GM12878 (cell line): ENCODE measurements at regions of chr1 and their contacts with region 1.

Region 1: DNA sequence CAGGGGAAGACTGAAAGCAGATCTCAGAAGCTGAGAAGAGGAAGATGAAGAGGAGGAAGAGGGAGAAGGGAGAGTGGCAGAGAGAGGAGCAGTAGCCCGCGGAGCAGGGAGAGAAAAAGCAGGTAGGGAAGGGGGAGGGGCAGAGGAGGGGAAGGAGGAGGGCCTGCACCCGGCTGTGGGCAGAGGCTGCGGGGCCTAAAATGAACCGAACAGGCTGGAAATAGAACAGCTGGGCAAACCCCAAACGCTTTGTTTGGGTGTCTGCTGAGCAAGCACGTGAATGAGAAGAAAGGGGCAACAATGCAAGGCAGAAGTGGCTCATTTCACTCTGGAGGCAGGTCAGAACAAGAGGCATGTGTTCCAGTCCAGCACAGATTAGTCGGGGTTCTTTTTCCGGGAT is 33.5 kb downstream of the KCNC4 start:
- DNase-seq: no peak
- ATAC-seq: peak; percentile 90
- H3K4me3 ChIP-seq: no peak overlapping the region
- H3K27ac ChIP-seq: no peak overlapping the region
- H3K4me1 ChIP-seq: peaks cover 15% of the 10 kb centered on the region; the same call in 1 of the 2 replicates
- H3K27me3 ChIP-seq: no peaks in the 10 kb centered on the region; a peak in 1 of 4 replicates
- CTCF ChIP-seq: no peak
- EP300 ChIP-seq: peak in 1 of 2 experiments; percentile 38; a peak in 1 of 4 replicates
- POLR2A ChIP-seq: no peak
- RAD21 ChIP-seq: no peak

Region 2: DNA sequence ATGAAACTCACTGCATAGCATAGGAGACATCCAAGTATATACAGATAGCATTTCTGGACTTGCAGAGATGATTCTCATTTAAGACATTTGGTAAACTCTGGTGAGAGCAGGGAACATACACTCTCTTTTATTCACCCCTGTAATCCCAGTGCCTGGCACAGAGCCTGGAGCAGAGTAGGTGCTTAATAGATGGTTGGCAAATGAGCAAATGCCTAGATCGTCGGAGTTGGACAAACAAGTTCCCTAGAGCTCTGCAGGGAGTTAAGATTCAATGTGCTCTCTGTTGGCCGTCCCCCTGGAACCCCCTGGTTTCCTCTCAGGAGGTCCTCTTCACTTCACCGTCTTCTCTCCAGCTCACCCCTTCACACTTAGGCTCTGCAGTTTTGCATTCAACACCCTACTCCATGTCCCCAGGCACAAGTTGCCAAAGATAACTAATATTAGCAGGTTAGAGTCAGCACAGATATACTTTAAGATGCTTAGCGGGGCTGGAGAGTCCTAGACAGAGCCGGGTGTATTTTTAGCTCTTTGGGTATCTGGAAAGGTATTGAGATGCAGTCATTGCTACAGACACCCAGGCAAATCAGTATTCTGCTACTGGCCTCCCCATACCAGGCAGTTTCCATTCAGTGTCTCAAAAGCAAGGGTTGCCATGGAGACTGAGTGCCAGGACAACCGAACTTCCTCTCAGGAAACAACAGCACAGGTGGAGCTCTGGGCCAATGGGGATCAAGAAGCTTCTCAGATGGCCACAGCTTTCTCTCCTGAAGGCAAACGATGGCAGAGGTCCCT is 11.6 kb after region 1 on chr1:
- CTCF ChIA-PET with region 1: interaction called, 5 read pairs
- POLR2A ChIA-PET with region 1: interaction called, 4 read pairs
- RAD21 ChIA-PET with region 1: interaction called, 5 read pairs
- SMC1A ChIA-PET with region 1: interaction called, 14 read pairs
- in situ Hi-C with region 1: no loop called
- intact Hi-C with region 1: no loop called
- DNase-seq: no peak
- ATAC-seq: peak; percentile 73
- H3K4me3 ChIP-seq: no peak overlapping the region
- H3K27ac ChIP-seq: no peak overlapping the region
- H3K4me1 ChIP-seq: peaks cover 6% of the 10 kb centered on the region
- H3K27me3 ChIP-seq: no peaks in the 10 kb centered on the region
- CTCF ChIP-seq: no peak
- EP300 ChIP-seq: no peak
- POLR2A ChIP-seq: no peak
- RAD21 ChIP-seq: no peak

Region 3: DNA sequence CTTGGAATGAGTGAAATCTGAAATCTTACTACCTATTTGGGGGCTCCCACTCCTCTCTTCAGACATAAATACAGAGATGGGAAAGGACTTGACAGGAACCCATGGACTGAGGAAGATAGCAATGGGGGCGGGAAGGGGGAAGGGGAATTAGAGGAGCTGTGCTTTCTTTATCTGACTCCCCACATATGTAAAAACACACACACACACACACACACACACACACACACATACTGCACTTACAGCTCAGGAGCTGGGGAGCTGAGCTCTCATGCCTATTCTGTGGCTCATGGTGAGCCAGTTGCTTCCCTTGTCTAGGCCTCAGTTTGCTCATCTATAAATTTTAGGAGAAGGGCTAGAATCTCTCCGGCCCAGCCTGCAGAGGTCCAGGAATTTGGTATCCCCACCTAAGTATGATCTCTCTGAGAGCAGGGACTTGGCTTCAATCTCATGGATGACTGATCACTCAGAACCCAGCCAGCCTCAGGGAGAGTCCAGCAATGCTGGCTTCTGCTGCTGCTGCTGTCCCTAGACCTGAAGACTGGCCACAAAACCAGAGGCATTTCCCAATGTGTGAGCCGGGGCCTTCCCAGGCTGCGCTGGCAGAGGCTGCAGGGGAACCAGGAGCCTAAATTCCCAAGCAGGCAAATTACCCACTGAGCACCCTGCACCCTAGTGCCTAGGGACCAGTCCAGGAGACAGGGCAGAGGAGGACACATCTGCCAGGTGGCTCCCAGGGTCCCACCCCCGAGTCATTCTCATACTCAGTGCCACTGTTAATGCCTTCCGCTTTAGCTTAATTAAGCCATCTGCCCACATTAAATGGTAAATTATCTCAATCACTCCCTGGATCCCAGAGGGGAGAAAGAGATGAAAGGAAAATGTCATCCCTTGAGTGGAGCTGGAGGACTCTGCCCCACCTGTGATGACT is 38.1 kb after region 1 on chr1:
- CTCF ChIA-PET with region 1: no interaction called
- POLR2A ChIA-PET with region 1: no interaction called
- RAD21 ChIA-PET with region 1: interaction called, 10 read pairs
- SMC1A ChIA-PET with region 1: interaction called, 3 read pairs
- in situ Hi-C with region 1: no loop called
- intact Hi-C with region 1: no loop called
- DNase-seq: no peak
- ATAC-seq: no peak
- H3K4me3 ChIP-seq: no peak overlapping the region
- H3K27ac ChIP-seq: no peak overlapping the region
- H3K4me1 ChIP-seq: no peaks in the 10 kb centered on the region
- H3K27me3 ChIP-seq: no peaks in the 10 kb centered on the region; a peak in 1 of 4 replicates
- CTCF ChIP-seq: no peak
- EP300 ChIP-seq: no peak
- POLR2A ChIP-seq: no peak
- RAD21 ChIP-seq: no peak